ENCODE measurements at regions of chr12 and their contacts with region 1.

Region 1: DNA sequence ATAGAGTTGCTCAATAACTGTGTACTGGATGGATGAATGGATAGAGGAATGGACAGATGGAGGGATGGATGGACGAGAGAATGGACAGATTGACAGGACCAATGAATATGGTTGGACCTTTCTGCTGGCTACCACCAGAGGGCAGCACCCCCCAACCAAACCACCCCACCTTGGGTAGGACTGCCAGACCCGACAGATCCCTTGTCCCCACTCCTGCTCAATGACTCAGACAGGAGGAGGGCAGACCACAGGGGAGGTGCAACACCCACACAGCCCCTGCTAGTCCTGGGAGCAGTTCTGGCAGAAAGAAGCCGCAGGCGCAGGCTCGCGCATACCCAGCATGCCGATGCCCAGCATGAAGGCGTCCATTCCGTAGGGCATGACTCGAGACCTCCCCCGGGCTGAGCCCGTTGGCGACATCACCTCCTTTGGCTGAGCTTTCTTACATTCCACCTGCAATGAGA is 12.4 kb downstream of the MSI1 start:
- DNase-seq: peak; percentile 73 to 87 (median 86)
- ATAC-seq: peak; percentile 86 to 89
- H3K4me3 ChIP-seq: no peak overlapping the region
- H3K27ac ChIP-seq: no peak overlapping the region
- H3K4me1 ChIP-seq: no peaks in the 10 kb centered on the region
- H3K27me3 ChIP-seq: no peaks in the 10 kb centered on the region

Region 2: GRCh38 chr12:120301962-120302815 is 54.4 kb before region 1 on chr12 and contains the start of gene SIRT4:
- intact Hi-C with region 1: no loop called
- DNase-seq: peak; percentile 91 to 96 (median 91)
- ATAC-seq: peak; percentile 96 to 97
- H3K4me3 ChIP-seq: peak within 1 kb of the TSS; percentile 93
- H3K27ac ChIP-seq: peak within 1 kb of the TSS; percentile 86
- H3K4me1 ChIP-seq: no peaks in the 10 kb centered on the region
- H3K27me3 ChIP-seq: no peaks in the 10 kb centered on the region
- total RNA-seq, gene SIRT4: 3.0 to 6.9 (median 6.2) TPM

Region 3: GRCh38 chr12:120432772-120433525 is 76.3 kb after region 1 on chr12:
- intact Hi-C with region 1: loop called (anchors 2 to 5 kb)
- DNase-seq: no peak
- ATAC-seq: no peak
- H3K4me3 ChIP-seq: no peak overlapping the region
- H3K27ac ChIP-seq: no peak overlapping the region
- H3K4me1 ChIP-seq: no peaks in the 10 kb centered on the region
- H3K27me3 ChIP-seq: no peaks in the 10 kb centered on the region

Measured in right cardiac atrium (tissue), 5 donors.